Activated T-helper 2 cell treated with anti-CD3 and anti-CD28 coated beads, Interferon-gamma antibody, Interleukin-2, Interleukin-4, amounts not matched to agents 10 μg/mL and 5 μg/mL and 100 μg/mL, durations not matched to agents 14 hours and 24 hours and 36 hours (primary cell): ENCODE measurements at regions of chr3 and their contacts with region 1.

Region 1: GRCh38 chr3:4584456-4585249 is 91.5 kb downstream of the ITPR1 start:
- DNase-seq: no peak
- H3K4me3 Mint-ChIP-seq: peak overlapping the region; percentile 71
- H3K27ac Mint-ChIP-seq: peak overlapping the region; percentile 71
- H3K4me1 Mint-ChIP-seq: peaks cover 51% of the 10 kb centered on the region
- H3K27me3 Mint-ChIP-seq: no peaks in the 10 kb centered on the region

Region 2: GRCh38 chr3:4517643-4518311 is 66.9 kb before region 1 on chr3:
- intact Hi-C with region 1: loop called (anchors 5 kb)
- DNase-seq: no peak
- H3K4me3 Mint-ChIP-seq: no peak overlapping the region
- H3K27ac Mint-ChIP-seq: peak overlapping the region; percentile 56
- H3K4me1 Mint-ChIP-seq: peaks cover 34% of the 10 kb centered on the region
- H3K27me3 Mint-ChIP-seq: no peaks in the 10 kb centered on the region

Region 3: GRCh38 chr3:4597204-4597985 is 12.7 kb after region 1 on chr3:
- intact Hi-C with region 1: loop called (anchors 2 kb)
- DNase-seq: no peak
- H3K4me3 Mint-ChIP-seq: no peak overlapping the region
- H3K27ac Mint-ChIP-seq: no peak overlapping the region
- H3K4me1 Mint-ChIP-seq: peaks cover 44% of the 10 kb centered on the region
- H3K27me3 Mint-ChIP-seq: no peaks in the 10 kb centered on the region